ENCODE measurements at regions of chr6 and their contacts with region 1.

Region 1: GRCh38 chr6:36780442-36781177 is 58.6 kb downstream of the CPNE5 start:
- DNase-seq: no peak
- H3K4me3 ChIP-seq: no peak overlapping the region
- H3K27ac ChIP-seq: no peak overlapping the region
- H3K4me1 ChIP-seq: peaks cover 4 to 18% (median 14%) of the 10 kb centered on the region in 4 experiments
- H3K27me3 ChIP-seq: peaks cover 0 to 4% (median 0%) of the 10 kb centered on the region in 4 experiments; a peak in 3 of 7 replicates
- CTCF ChIP-seq: no peak
- EP300 ChIP-seq: no peak
- POLR2A ChIP-seq: no peak
- RAD21 ChIP-seq: no peak

Region 2: GRCh38 chr6:36793913-36794712 is 13.5 kb after region 1 on chr6:
- CTCF ChIA-PET with region 1: interaction called, 114 read pairs
- POLR2A ChIA-PET with region 1: interaction called, 15 read pairs
- DNase-seq: no peak
- H3K4me3 ChIP-seq: peak overlapping the region in 3 of 4 experiments; percentile 9 to 49 (median 14); a peak in 5 of 8 replicates
- H3K27ac ChIP-seq: 0 out of 2 replicates have a peak overlapping the region, but pooled peaks have one; percentile 30
- H3K4me1 ChIP-seq: peaks cover 4 to 37% (median 25%) of the 10 kb centered on the region in 4 experiments
- H3K27me3 ChIP-seq: no peaks in the 10 kb centered on the region
- CTCF ChIP-seq: no peak
- EP300 ChIP-seq: no peak
- POLR2A ChIP-seq: no peak
- RAD21 ChIP-seq: no peak

Region 3: GRCh38 chr6:36809941-36810803 is 29.6 kb after region 1 on chr6:
- CTCF ChIA-PET with region 1: interaction called, 18 read pairs
- POLR2A ChIA-PET with region 1: interaction called, 4 read pairs
- DNase-seq: no peak
- H3K4me3 ChIP-seq: no peak overlapping the region
- H3K27ac ChIP-seq: no peak overlapping the region
- H3K4me1 ChIP-seq: peaks cover 1 to 11% (median 3%) of the 10 kb centered on the region in 4 experiments; a peak in 4 of 7 replicates
- H3K27me3 ChIP-seq: no peaks in the 10 kb centered on the region; a peak in 2 of 7 replicates
- CTCF ChIP-seq: peak; percentile 44 to 48 (median 44)
- EP300 ChIP-seq: no peak
- POLR2A ChIP-seq: no peak
- RAD21 ChIP-seq: peak; percentile 61 to 67

Region 4: DNA sequence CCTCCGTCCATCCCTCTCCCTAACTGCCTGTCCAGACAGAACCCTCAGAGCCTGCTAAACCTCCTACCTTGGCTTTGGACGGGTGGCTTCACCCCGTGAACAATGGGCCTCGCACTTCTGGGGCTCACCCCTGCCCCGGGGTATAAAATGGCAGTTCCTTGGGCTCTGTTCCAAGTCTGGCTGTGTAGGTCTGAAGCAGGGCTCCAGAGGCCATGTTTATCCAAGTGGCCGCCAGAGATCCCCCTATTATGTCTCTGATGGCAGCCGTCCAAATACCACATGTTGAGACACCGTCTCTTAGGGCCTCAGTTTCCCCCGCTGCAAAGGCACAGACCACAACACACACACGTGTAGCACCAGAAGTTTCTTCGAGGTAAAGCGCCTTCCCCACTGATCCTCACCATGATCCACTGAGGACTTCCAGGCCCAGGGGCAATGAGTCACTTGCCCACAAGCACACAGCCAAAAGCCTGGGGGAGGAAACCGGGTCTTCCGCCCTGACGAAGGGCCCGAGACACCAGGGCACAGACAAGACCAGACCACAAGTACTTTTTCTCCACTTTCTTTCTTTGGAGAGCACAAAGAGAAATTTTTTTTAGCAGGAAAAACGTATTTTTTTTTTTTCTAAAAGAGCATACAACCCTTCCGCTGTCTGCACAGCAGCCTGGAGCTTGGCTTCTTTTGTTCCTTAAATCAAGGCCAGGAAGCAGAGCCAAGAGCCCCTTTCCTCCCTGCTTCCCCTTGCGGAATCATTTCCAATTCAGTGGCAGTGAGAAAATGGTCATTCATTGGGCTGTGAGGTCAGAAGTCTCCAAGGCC is 46.9 kb after region 1 on chr6:
- CTCF ChIA-PET with region 1: interaction called, 14 read pairs
- POLR2A ChIA-PET with region 1: no interaction called
- DNase-seq: no peak
- H3K4me3 ChIP-seq: no peak overlapping the region
- H3K27ac ChIP-seq: no peak overlapping the region
- H3K4me1 ChIP-seq: no peaks in the 10 kb centered on the region; a peak in 1 of 7 replicates
- H3K27me3 ChIP-seq: no peaks in the 10 kb centered on the region; a peak in 1 of 7 replicates
- CTCF ChIP-seq: no peak
- EP300 ChIP-seq: no peak
- POLR2A ChIP-seq: no peak
- RAD21 ChIP-seq: no peak

Region 5: GRCh38 chr6:36839749-36840431 is 59.3 kb after region 1 on chr6:
- CTCF ChIA-PET with region 1: interaction called, 293 read pairs
- POLR2A ChIA-PET with region 1: interaction called, 3 read pairs
- DNase-seq: peak in 1 of 2 experiments; percentile 63
- H3K4me3 ChIP-seq: peak overlapping the region; percentile 46 to 79 (median 58)
- H3K27ac ChIP-seq: no peak overlapping the region
- H3K4me1 ChIP-seq: peaks cover 0 to 12% (median 7%) of the 10 kb centered on the region in 4 experiments; a peak in 6 of 7 replicates
- H3K27me3 ChIP-seq: peaks cover 22 to 50% (median 44%) of the 10 kb centered on the region in 4 experiments
- CTCF ChIP-seq: peak in 2 of 3 experiments; percentile 5 to 31; a peak in 3 of 4 replicates
- EP300 ChIP-seq: no peak
- POLR2A ChIP-seq: no peak
- RAD21 ChIP-seq: no peak